ENCODE measurements at regions of chr19 and their contacts with region 1.

Region 1: DNA sequence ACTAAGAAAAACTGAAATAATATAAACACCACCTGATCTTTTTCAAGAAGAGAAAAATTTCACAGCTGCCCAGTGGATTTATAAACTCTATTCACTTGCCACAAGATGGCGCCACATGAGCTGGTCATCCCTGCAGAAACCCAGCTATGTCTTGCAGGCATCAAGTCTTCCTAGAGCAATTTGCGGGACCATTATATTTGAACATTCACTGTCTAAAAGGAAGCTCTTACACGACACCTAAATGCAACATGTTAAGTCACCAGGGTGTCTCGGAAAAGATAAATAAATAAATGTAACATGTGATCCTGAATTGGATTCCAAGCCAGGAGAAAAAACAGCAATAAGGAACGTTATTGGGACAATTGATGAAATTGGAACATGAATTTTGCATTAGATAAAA is 20.3 kb upstream of the AKT2 start:
- DNase-seq: peak; percentile 39 to 75 (median 63)
- ATAC-seq: peak; percentile 80
- H3K4me3 ChIP-seq: no peak overlapping the region
- H3K4me3 Mint-ChIP-seq: no peak overlapping the region
- H3K27ac ChIP-seq: no peak overlapping the region
- H3K27ac Mint-ChIP-seq: no peak overlapping the region
- H3K4me1 ChIP-seq: no peaks in the 10 kb centered on the region
- H3K4me1 Mint-ChIP-seq: peaks cover 0 to 5% (median 4%) of the 10 kb centered on the region in 7 donors
- H3K27me3 ChIP-seq: no peaks in the 10 kb centered on the region
- H3K27me3 Mint-ChIP-seq: no peaks in the 10 kb centered on the region

Region 2: GRCh38 chr19:40523322-40524047 is 218.1 kb after region 1 on chr19:
- CTCF ChIA-PET with region 1: no interaction called
- POLR2A ChIA-PET with region 1: no interaction called
- intact Hi-C with region 1: loop called (anchors 1 to 10 kb)
- DNase-seq: peak in 4 of 9 donors; percentile 19 to 56 (median 26)
- ATAC-seq: peak; percentile 87
- H3K4me3 ChIP-seq: no peak overlapping the region
- H3K4me3 Mint-ChIP-seq: no peak overlapping the region
- H3K27ac ChIP-seq: no peak overlapping the region
- H3K27ac Mint-ChIP-seq: no peak overlapping the region
- H3K4me1 ChIP-seq: no peaks in the 10 kb centered on the region
- H3K4me1 Mint-ChIP-seq: peaks cover 0 to 12% (median 5%) of the 10 kb centered on the region in 7 donors
- H3K27me3 ChIP-seq: no peaks in the 10 kb centered on the region
- H3K27me3 Mint-ChIP-seq: peaks cover 11 to 23% (median 19%) of the 10 kb centered on the region in 5 donors

Region 3: GRCh38 chr19:40633207-40633606 is 327.8 kb after region 1 on chr19:
- CTCF ChIA-PET with region 1: interaction called, 10 read pairs
- POLR2A ChIA-PET with region 1: no interaction called
- intact Hi-C with region 1: loop called in 1 of 2 experiments (anchors 1 kb)
- DNase-seq: no peak
- ATAC-seq: no peak
- H3K4me3 ChIP-seq: no peak overlapping the region
- H3K4me3 Mint-ChIP-seq: no peak overlapping the region
- H3K27ac ChIP-seq: no peak overlapping the region
- H3K27ac Mint-ChIP-seq: peak overlapping the region in 2 of 9 donors; percentile 11 to 78
- H3K4me1 ChIP-seq: peaks cover 4 to 5% of the 10 kb centered on the region in 2 donors
- H3K4me1 Mint-ChIP-seq: peaks cover 7 to 19% (median 16%) of the 10 kb centered on the region in 7 donors
- H3K27me3 ChIP-seq: no peaks in the 10 kb centered on the region
- H3K27me3 Mint-ChIP-seq: peaks cover 0 to 20% (median 0%) of the 10 kb centered on the region in 5 donors

Measured in naive thymus-derived CD4-positive, alpha-beta T cell (primary cell).